ENCODE measurements at regions of chr1 and their contacts with region 1.

Region 1: DNA sequence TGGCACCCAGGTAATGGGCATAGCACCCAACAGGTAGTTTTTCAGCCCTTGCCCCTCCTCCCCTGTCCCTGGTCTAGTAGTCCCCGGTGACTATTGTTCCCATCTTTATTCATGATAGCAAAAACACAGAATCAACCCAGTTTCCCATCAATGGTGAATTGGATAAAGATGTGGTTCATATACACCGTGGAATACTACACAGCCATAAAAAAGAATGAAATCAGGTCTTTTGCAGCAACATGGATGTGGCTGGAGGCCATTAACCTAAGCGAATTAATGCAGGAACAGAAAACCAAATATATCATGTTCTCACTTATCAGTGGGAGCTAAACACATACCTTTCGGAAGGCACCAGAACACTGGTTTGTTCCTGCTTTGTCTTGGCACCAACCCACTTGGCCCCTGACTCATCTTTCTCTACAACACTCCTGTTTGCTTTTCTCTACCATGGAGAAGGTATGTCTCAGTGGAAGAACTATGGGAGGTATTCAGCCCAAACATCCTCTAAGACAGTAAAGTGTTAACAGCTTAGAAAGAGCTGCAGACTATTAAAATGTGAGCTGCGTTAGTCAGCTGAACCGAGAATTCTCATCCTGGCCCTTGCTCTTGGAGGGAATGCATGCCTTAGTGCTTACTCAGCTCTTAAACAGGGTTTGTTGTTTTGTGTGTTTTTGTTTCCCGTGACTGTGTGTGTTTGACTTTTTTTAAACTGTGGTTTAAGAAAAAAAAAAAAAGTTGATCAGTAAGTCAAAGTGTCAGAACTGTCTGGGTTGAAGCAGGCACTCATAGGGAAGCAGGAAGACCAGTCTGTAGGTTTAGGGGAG is 203.0 kb downstream of the TOMM20 start:
- DNase-seq: peak; percentile 74 to 99
- H3K4me3 ChIP-seq: no peak overlapping the region
- H3K27ac ChIP-seq: peak overlapping the region; percentile 88
- H3K4me1 ChIP-seq: peaks cover 37% of the 10 kb centered on the region
- H3K27me3 ChIP-seq: no peaks in the 10 kb centered on the region
- CTCF ChIP-seq: no peak

Region 2: GRCh38 chr1:234599617-234600417 is 325.8 kb before region 1 on chr1:
- CTCF ChIA-PET with region 1: no interaction called
- POLR2A ChIA-PET with region 1: no interaction called
- intact Hi-C with region 1: loop called (anchors 2 kb)
- DNase-seq: peak; percentile 69 to 89
- H3K4me3 ChIP-seq: peak overlapping the region; percentile 62
- H3K27ac ChIP-seq: peak overlapping the region; percentile 99
- H3K4me1 ChIP-seq: peaks cover 61% of the 10 kb centered on the region
- H3K27me3 ChIP-seq: no peaks in the 10 kb centered on the region
- CTCF ChIP-seq: no peak; the same call in 1 of the 2 replicates

Region 3: GRCh38 chr1:234862944-234863515 is 62.6 kb before region 1 on chr1:
- CTCF ChIA-PET with region 1: no interaction called
- POLR2A ChIA-PET with region 1: no interaction called
- intact Hi-C with region 1: loop called (anchors 1 kb)
- DNase-seq: no peak
- H3K4me3 ChIP-seq: no peak overlapping the region
- H3K27ac ChIP-seq: no peak overlapping the region
- H3K4me1 ChIP-seq: peaks cover 56% of the 10 kb centered on the region
- H3K27me3 ChIP-seq: no peaks in the 10 kb centered on the region
- CTCF ChIP-seq: no peak

Region 4: GRCh38 chr1:234899041-234899729 is 26.5 kb before region 1 on chr1:
- CTCF ChIA-PET with region 1: no interaction called
- POLR2A ChIA-PET with region 1: no interaction called
- intact Hi-C with region 1: loop called (anchors 1 kb)
- DNase-seq: peak; percentile 82
- H3K4me3 ChIP-seq: no peak overlapping the region
- H3K27ac ChIP-seq: peak overlapping the region; percentile 59
- H3K4me1 ChIP-seq: peaks cover 67% of the 10 kb centered on the region
- H3K27me3 ChIP-seq: no peaks in the 10 kb centered on the region
- CTCF ChIP-seq: no peak

Region 5: DNA sequence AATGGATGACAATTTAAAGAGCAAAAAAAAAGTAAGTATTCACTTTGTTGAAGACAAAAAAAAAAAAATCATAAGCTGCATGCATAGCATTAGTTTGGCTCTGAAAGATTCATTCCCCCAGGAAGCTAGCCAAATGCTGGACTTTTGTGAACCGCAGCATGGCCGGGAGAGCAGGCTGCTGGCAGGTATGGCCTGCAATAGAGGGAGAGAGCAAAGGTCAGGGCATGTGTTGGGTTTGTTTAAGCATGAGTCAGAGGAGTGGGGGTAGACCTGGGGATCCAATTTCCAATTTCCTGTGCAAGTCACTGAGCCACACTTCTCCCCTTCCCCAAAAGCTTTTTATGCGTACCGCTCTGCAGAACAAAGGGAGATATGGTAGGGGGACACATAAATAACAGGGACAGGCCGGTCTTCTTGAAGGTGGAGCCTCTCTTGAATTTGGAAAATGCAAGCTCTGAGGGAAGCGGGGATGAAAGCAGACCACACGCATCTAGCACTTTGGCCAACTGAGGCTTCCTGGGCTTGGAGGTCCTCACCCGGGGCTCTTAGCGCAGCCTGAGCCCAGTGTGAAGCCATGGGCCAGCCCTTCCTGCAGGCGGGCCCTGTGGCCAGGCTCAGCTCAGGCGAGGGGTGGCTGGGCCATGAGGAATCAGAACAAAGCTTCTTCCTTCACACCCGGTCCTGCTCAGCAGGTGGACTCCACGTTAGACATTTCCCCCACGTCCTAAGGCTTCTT is 31.8 kb after region 1 on chr1:
- CTCF ChIA-PET with region 1: no interaction called
- POLR2A ChIA-PET with region 1: interaction called, 10 read pairs
- intact Hi-C with region 1: loop called (anchors 1 kb)
- DNase-seq: peak; percentile 91 to 96
- H3K4me3 ChIP-seq: peak overlapping the region; percentile 37; the same call in 1 of the 2 replicates
- H3K27ac ChIP-seq: peak overlapping the region; percentile 99
- H3K4me1 ChIP-seq: peaks cover 82% of the 10 kb centered on the region
- H3K27me3 ChIP-seq: no peaks in the 10 kb centered on the region
- CTCF ChIP-seq: no peak

Region 6: DNA sequence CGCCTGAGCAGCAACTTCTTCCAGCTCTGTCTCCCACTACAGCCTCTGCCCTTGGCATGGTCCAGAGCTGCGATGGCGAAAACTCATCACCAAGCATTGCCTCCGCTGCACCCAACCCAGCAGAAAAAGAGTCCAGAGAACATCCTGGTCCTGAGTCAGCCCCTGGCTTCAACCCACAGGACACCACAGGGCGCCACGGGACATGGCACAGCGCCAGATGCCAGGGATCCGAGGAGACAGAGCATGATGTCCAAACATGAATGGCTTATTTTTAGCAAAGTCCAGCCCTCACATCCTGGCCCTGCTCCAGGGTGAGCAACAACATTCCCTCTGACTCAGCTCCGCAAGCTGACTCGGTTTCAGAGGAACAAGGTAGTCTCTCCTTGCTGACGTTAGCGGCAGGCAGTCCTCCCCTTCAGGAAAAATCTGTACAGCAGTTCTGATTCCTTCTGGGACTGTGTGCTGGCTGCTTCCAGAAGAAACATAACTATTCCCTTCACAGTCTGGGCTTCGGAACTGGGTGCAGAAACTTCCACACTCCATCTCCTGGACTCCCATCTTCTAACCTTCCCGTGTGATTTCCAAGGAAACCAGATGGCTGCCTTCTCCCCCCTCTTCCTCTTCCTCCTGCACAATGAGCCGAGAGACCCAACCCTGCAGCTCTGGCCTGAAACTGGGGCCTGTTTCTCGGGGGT is 71.7 kb after region 1 on chr1:
- CTCF ChIA-PET with region 1: no interaction called
- POLR2A ChIA-PET with region 1: no interaction called
- intact Hi-C with region 1: loop called (anchors 1 kb)
- DNase-seq: peak; percentile 99 to 100
- H3K4me3 ChIP-seq: peak overlapping the region; percentile 45
- H3K27ac ChIP-seq: peak overlapping the region; percentile 100
- H3K4me1 ChIP-seq: peaks cover 34% of the 10 kb centered on the region
- H3K27me3 ChIP-seq: no peaks in the 10 kb centered on the region
- CTCF ChIP-seq: no peak

Region 7: GRCh38 chr1:235075188-235075926 is 149.7 kb after region 1 on chr1:
- CTCF ChIA-PET with region 1: interaction called, 4 read pairs
- POLR2A ChIA-PET with region 1: interaction called, 14 read pairs
- intact Hi-C with region 1: loop called (anchors 1 kb)
- DNase-seq: peak; percentile 66 to 95
- H3K4me3 ChIP-seq: peak overlapping the region; percentile 61
- H3K27ac ChIP-seq: peak overlapping the region; percentile 100
- H3K4me1 ChIP-seq: peaks cover 94% of the 10 kb centered on the region
- H3K27me3 ChIP-seq: no peaks in the 10 kb centered on the region
- CTCF ChIP-seq: no peak